Activated naive CD4-positive, alpha-beta T cell treated with anti-CD3 and anti-CD28 coated beads for 36 hours (primary cell): ENCODE measurements at regions of chr1 and their contacts with region 1.

Region 1: GRCh38 chr1:222465211-222466041 is 82.5 kb downstream of the HHIPL2 start:
- DNase-seq: peak; percentile 78
- H3K4me3 Mint-ChIP-seq: peak overlapping the region; percentile 67
- H3K27ac Mint-ChIP-seq: peak overlapping the region; percentile 85
- H3K4me1 Mint-ChIP-seq: peaks cover 10% of the 10 kb centered on the region
- H3K27me3 Mint-ChIP-seq: no peaks in the 10 kb centered on the region

Region 2: DNA sequence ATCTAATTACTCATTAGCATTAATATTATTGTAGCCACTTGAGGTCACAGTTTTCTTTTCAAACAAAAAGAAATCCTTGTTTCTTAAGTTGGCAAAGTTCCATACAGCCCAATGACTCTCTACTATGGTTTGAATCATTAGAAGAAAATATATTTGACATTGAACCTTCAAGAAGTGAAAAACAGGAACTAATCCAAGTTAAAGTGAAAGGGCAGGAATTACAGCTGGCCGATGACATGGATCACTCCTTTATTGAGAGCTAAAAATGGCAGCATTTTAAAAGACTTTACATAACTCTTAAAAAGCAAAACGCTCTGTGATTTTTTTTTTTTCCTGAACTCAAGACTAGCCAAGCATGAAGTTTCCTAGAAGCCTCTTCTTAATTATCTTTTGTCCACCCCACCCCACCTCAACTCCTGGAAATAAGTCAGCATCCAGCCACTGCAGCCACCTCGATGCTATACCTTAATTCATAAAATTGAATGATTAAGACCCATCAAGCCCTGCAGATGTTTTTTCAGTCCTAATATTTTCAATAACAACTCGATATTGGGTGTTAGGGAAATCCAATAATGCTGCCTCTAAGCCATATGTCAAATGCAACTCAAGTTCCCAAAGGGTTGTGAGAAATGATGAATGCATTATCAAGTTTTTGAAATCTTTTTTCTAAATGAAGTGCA is 240.7 kb before region 1 on chr1:
- CTCF ChIA-PET with region 1: no interaction called
- intact Hi-C with region 1: no loop called
- DNase-seq: no peak
- H3K4me3 Mint-ChIP-seq: no peak overlapping the region
- H3K27ac Mint-ChIP-seq: no peak overlapping the region
- H3K4me1 Mint-ChIP-seq: no peaks in the 10 kb centered on the region
- H3K27me3 Mint-ChIP-seq: no peaks in the 10 kb centered on the region

Region 3: DNA sequence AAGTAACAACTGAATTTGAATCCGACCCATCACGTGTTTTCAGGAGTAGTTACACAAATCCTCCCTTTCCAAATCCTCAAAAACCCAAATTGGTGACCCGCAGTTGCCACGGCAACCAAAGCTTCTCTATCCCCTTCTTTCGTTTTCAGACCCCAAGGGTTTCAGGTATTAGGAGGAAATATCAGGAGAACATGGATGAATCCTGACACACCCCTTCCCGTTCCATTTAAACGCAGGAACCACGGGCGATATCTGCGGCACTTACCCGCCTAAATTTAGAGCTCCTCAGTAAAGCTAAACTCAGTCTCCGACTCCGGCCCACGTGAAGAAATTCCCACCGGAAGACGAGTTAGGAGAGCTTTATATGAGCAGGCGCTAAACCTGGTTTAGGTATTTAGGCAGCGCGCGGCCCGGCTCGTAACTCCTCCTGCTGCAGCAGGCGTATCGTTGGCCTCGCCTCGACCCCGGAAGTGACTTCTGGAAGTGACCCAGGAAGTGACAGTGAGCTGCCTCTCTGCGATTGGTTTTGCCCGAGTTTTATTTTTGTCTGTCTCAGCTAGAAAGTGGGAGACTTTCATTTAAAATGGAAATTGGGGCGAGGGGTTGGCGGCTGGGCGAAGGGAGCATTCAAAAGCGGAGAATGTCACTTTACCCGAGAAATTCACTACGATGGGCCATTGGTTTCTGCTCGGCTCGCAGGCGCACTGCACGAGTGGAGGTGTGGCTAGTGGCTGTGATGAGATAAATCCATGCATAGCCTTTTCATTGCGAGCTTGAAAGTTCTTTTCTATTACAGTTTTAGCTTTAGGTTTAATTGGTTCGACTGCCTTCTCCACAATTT is 124.3 kb after region 1 on chr1 and contains the start of gene TAF1A:
- CTCF ChIA-PET with region 1: interaction called, 6 read pairs
- intact Hi-C with region 1: loop called (anchors 1 kb)
- DNase-seq: peak; percentile 93
- H3K4me3 Mint-ChIP-seq: peak within 1 kb of the TSS; percentile 99
- H3K27ac Mint-ChIP-seq: peak within 1 kb of the TSS; percentile 97
- H3K4me1 Mint-ChIP-seq: peaks cover 47% of the 10 kb centered on the region
- H3K27me3 Mint-ChIP-seq: no peaks in the 10 kb centered on the region
- total RNA-seq, gene TAF1A: 19.5 to 20.5 TPM

Region 4: GRCh38 chr1:222634180-222635013 is 169.0 kb after region 1 on chr1:
- CTCF ChIA-PET with region 1: interaction called, 36 read pairs
- intact Hi-C with region 1: loop called (anchors 1 kb)
- DNase-seq: peak; percentile 85
- H3K4me3 Mint-ChIP-seq: no peak overlapping the region
- H3K27ac Mint-ChIP-seq: no peak overlapping the region
- H3K4me1 Mint-ChIP-seq: peaks cover 4% of the 10 kb centered on the region
- H3K27me3 Mint-ChIP-seq: no peaks in the 10 kb centered on the region

Region 5: GRCh38 chr1:222713091-222713961 is 247.9 kb after region 1 on chr1:
- CTCF ChIA-PET with region 1: interaction called, 5 read pairs
- intact Hi-C with region 1: loop called (anchors 1 kb)
- DNase-seq: peak; percentile 91
- H3K4me3 Mint-ChIP-seq: peak overlapping the region; percentile 100
- H3K27ac Mint-ChIP-seq: peak overlapping the region; percentile 98
- H3K4me1 Mint-ChIP-seq: peaks cover 37% of the 10 kb centered on the region
- H3K27me3 Mint-ChIP-seq: no peaks in the 10 kb centered on the region

Region 6: GRCh38 chr1:223081181-223081994 is 616.0 kb after region 1 on chr1:
- CTCF ChIA-PET with region 1: no interaction called
- intact Hi-C with region 1: loop called (anchors 1 kb)
- DNase-seq: peak; percentile 81
- H3K4me3 Mint-ChIP-seq: peak overlapping the region; percentile 61
- H3K27ac Mint-ChIP-seq: no peak overlapping the region
- H3K4me1 Mint-ChIP-seq: no peaks in the 10 kb centered on the region
- H3K27me3 Mint-ChIP-seq: no peaks in the 10 kb centered on the region

Region 7: GRCh38 chr1:224087286-224087794 is 1621.9 kb after region 1 on chr1:
- CTCF ChIA-PET with region 1: no interaction called
- intact Hi-C with region 1: no loop called
- DNase-seq: no peak
- H3K4me3 Mint-ChIP-seq: no peak overlapping the region
- H3K27ac Mint-ChIP-seq: no peak overlapping the region
- H3K4me1 Mint-ChIP-seq: no peaks in the 10 kb centered on the region
- H3K27me3 Mint-ChIP-seq: peaks cover 5% of the 10 kb centered on the region